Activated CD4-positive, alpha-beta T cell treated with anti-CD3 and anti-CD28 coated beads, Interleukin-2, amount 10 ng/mL, durations not matched to agents 7 days and 5 days (primary cell): ENCODE measurements at regions of chr13 and their contacts with region 1.

Region 1: DNA sequence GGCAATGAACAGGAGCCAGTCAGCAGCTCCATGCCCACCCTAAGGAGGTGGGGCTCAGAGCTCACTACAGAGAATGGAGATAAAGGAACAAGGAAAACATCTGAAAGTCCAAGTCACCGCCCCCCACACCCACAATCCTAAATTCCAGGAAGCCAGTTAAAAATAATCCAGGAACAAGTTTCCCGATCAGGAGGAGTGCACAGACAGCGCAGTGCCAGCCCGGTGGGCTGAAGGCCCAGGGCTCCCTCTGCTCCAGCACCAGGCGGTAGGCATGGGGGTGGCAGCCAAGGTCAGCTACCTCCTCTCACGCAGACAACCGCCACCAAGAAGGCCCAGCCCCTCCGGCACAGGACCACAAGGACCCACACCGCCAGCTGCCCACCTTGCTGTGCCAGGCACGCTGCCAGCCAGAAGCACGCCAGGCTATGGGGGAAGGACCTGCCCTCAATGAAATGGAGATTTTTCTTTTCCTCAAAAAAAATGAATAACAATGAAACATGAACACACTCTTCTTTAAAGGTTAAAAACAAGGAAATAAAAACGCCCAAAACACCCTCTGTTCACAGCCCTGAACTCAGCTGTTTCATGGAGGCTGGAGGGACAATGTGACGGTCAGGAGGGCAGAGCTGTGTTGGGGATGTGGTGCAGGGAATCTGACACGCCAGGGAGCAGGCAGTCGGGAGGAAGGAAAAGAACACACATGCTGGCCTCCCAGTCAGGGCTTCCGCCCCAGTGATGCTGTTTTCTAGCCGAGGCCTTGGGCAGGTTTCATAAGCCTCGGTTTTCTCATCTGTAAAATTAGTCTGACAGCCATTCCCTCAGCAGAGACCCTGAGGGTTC is 11.0 kb downstream of the STK24 start:
- DNase-seq: no peak
- H3K4me3 Mint-ChIP-seq: peak overlapping the region; percentile 4
- H3K27ac Mint-ChIP-seq: peak overlapping the region; percentile 93
- H3K4me1 Mint-ChIP-seq: peaks cover 91% of the 10 kb centered on the region
- H3K27me3 Mint-ChIP-seq: no peaks in the 10 kb centered on the region

Region 2: DNA sequence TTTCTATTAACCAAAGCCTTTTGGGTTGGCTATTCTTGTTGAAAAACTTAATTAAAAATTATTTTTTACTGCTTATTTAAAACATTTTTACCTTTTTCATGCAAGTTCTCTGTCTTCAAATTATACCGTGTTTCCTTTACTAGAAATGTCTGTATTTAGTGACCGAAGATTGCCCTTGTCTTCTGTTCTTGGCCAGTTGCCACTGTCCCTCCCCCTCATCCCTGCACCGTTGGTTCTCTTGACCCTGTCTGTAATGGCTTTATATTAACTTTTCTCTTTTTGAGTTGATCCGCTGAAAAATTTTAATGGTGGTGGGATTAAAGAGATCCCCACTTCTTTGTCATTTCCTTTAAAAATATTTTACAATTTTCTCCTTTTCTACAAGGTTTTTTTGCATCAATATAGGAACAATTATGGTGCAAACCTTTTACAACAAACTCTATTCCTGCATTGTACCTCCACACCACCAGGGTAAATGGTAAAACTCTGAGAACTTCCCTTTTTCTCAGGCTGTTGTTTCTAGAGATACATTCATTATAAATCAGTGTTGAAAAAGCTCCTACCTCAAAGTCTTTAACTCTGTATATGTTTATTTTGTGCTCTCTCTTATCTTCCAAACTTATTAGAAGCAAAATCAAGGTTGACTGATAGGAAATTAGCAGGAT is 376.0 kb before region 1 on chr13:
- CTCF ChIA-PET with region 1: no interaction called
- POLR2A ChIA-PET with region 1: no interaction called
- DNase-seq: no peak
- H3K4me3 Mint-ChIP-seq: no peak overlapping the region
- H3K27ac Mint-ChIP-seq: no peak overlapping the region
- H3K4me1 Mint-ChIP-seq: no peaks in the 10 kb centered on the region
- H3K27me3 Mint-ChIP-seq: no peaks in the 10 kb centered on the region

Region 3: GRCh38 chr13:98549006-98549727 is 16.8 kb before region 1 on chr13:
- CTCF ChIA-PET with region 1: interaction called, 11 read pairs
- POLR2A ChIA-PET with region 1: no interaction called
- DNase-seq: no peak
- H3K4me3 Mint-ChIP-seq: no peak overlapping the region
- H3K27ac Mint-ChIP-seq: no peak overlapping the region
- H3K4me1 Mint-ChIP-seq: peaks cover 75% of the 10 kb centered on the region
- H3K27me3 Mint-ChIP-seq: no peaks in the 10 kb centered on the region

Region 4: GRCh38 chr13:98586400-98587345 is 20.7 kb after region 1 on chr13:
- CTCF ChIA-PET with region 1: no interaction called
- POLR2A ChIA-PET with region 1: no interaction called
- DNase-seq: no peak
- H3K4me3 Mint-ChIP-seq: no peak overlapping the region
- H3K27ac Mint-ChIP-seq: no peak overlapping the region
- H3K4me1 Mint-ChIP-seq: peaks cover 8% of the 10 kb centered on the region
- H3K27me3 Mint-ChIP-seq: no peaks in the 10 kb centered on the region

Region 5: DNA sequence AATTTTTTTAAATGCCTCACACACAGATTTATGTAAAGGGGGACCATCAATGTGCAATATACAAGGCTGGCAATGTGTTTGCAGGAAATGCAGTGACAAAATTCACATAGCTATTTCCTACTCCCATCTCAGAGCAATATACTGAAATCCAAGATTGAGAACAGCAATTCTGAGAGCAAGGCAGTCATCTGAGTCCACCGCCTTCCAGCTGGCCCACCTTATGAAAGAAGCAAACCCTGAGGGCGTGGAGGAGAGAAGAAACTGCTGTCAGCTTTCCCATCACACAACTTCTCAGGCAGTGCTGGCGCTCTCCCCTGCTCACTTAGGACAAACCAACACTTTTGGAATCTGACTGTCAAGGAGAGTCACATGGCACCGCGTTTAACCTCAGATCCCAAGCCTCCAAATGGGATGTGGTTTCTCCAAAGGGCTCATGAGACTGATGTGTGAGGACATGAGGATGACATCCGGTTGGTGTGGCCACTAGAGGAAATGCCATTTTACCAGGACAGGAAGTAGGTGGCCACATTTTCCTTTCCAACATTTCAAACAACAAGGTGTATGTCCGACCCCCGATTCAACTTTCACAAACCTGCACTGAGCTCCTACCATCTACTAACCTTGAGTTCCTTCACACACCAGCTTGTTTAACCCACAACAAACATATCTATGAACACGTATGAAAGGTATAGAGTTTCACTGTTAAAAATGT is 415.6 kb after region 1 on chr13:
- CTCF ChIA-PET with region 1: no interaction called
- POLR2A ChIA-PET with region 1: interaction called, 12 read pairs
- DNase-seq: no peak
- H3K4me3 Mint-ChIP-seq: no peak overlapping the region
- H3K27ac Mint-ChIP-seq: peak overlapping the region; percentile 1
- H3K4me1 Mint-ChIP-seq: peaks cover 44% of the 10 kb centered on the region
- H3K27me3 Mint-ChIP-seq: no peaks in the 10 kb centered on the region